A549 (cell line): ENCODE measurements at regions of chr1 and their contacts with region 1.

Region 1: DNA sequence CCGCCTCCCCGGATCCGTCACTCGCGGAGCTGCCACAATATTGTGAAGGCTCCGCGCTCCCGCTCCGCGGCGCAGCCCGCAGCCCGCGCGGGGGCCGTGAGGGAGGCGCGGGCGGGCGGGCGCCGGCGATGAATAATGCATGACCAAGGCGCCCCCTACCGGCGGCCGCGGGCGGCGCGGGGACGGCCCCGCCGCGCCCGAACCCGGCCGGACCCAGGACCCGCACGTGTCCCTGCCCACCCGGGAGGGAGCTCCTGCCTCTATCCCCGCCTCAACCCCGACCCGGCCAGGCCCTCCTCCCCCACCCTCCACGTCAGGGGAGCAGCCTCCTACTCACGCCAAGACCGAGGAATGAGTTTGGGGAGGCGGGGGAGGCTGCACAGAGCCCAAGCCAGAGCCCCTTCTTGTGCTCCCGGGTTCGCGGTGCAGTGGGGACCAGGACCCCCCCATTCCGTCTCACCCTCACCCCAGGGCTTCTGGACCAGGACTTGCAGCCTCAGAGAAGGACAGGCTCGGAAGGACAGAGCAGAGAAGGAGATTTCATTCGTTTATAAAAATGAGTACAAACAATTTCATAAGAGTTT is 70.8 kb upstream of the CASZ1 start:
- DNase-seq: peak; percentile 6 to 24
- ATAC-seq: peak; percentile 85 to 91
- H3K4me3 ChIP-seq: peak overlapping the region; percentile 62
- H3K27ac ChIP-seq: peak overlapping the region; percentile 62 to 83; a peak in 4 of 6 replicates
- H3K4me1 ChIP-seq: 0 out of 3 replicates have a peak, but pooled peaks cover 4% of the 10 kb centered on the region
- CTCF ChIP-seq: peak; percentile 82
- EP300 ChIP-seq: no peak
- POLR2A ChIP-seq: no peak
- RAD21 ChIP-seq: peak; percentile 34 to 90; a peak in 4 of 5 replicates

Region 2: GRCh38 chr1:10507111-10507879 is 359.9 kb before region 1 on chr1:
- CTCF ChIA-PET with region 1: interaction called, 12 read pairs
- POLR2A ChIA-PET with region 1: no interaction called
- DNase-seq: peak; percentile 65 to 70
- ATAC-seq: peak; percentile 85 to 87
- H3K4me3 ChIP-seq: no peak overlapping the region
- H3K27ac ChIP-seq: no peak overlapping the region
- H3K4me1 ChIP-seq: peaks cover 40% of the 10 kb centered on the region
- CTCF ChIP-seq: peak; percentile 73
- EP300 ChIP-seq: no peak
- POLR2A ChIP-seq: no peak
- RAD21 ChIP-seq: peak; percentile 79 to 83

Region 3: DNA sequence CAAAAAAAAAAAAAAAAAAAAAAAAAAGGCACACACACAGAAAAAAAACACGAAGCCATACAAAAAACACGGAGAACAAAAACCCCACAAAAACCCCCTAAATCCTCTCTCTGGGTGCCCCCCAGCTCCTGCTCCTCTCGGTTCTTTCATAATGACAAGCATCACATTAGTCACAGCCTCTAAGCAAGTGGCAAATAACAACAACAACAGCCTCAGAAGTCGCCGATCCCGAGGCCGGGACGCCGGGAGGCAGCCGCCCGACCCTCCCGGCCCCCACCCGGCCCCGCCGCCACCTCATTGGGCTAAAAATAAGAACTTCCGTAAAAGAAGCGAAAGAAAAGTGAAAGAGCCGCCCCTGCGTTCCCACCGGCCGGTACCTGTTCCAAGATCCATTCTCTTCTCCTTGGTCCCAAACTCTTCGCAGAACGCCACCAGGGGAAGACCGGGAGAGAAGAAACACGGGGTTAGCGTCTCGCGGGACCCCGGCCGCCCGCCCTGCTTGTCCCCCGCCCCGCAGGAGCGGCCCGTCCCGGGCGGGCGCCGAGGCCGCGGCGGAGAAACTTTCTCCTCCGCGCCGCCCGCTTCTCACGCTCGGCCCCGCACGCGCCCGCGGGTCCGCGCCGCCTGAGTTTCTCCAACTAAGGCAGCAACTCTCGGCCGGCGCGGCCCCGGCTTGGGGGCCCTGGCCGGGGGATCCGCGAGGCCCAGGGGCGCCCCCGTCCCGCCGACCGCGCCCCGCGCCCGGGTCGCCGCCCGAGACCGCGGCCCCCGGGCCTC is 173.5 kb before region 1 on chr1:
- CTCF ChIA-PET with region 1: interaction called, 12 read pairs
- POLR2A ChIA-PET with region 1: no interaction called
- DNase-seq: peak in 1 of 2 experiments; percentile 28
- ATAC-seq: peak; percentile 14 to 36; a peak in 4 of 6 replicates
- H3K4me3 ChIP-seq: peak overlapping the region; percentile 82
- H3K27ac ChIP-seq: peak overlapping the region; percentile 41 to 83
- H3K4me1 ChIP-seq: peaks cover 5% of the 10 kb centered on the region; the same call in 1 of the 3 replicates
- CTCF ChIP-seq: no peak
- EP300 ChIP-seq: no peak
- POLR2A ChIP-seq: no peak
- RAD21 ChIP-seq: no peak

Region 4: DNA sequence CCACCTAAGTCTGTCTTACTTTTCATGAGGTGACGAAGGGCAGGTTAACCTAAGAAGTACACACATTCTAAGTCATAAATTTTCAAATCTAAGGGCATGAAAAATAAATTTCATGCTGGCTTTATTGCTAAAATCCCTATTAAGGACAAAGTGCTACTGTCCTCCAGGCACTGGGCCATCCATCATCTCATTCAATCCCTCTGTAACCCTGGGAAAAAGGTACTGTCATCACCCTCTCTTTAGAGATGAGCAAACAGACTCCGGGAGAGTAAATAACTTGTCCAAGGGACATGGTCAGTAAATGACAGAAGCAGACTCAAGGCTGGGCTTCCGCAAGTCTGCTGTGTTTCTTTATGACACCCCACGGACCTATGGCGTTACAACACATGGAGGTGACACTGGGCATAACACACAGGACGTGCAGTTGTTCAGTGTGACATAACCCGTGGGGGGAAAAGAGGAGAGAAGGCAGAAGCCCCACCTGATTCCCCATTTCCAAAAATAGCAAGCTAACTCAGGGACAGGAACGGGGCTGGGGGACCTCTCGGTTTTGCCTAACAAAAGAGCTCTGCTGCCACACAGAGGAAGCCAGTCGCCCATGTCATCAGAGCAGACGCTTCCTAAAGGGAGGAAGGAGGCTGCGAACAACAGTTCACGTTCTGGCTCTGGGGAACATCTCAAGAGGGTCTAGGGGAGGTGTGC is 205.1 kb after region 1 on chr1:
- CTCF ChIA-PET with region 1: no interaction called
- POLR2A ChIA-PET with region 1: no interaction called
- DNase-seq: no peak
- ATAC-seq: no peak
- H3K4me3 ChIP-seq: no peak overlapping the region
- H3K27ac ChIP-seq: no peak overlapping the region
- H3K4me1 ChIP-seq: no peaks in the 10 kb centered on the region
- CTCF ChIP-seq: no peak
- EP300 ChIP-seq: no peak
- POLR2A ChIP-seq: no peak
- RAD21 ChIP-seq: no peak